Right cardiac atrium (tissue), 5 donors: ENCODE measurements at regions of chr14 and their contacts with region 1.

Region 1: GRCh38 chr14:23478111-23478759 is 8.7 kb downstream of the NGDN start:
- DNase-seq: peak; percentile 38 to 74 (median 62)
- ATAC-seq: peak; percentile 30 to 50
- H3K4me3 ChIP-seq: no peak overlapping the region
- H3K27ac ChIP-seq: no peak overlapping the region
- H3K4me1 ChIP-seq: no peaks in the 10 kb centered on the region
- H3K27me3 ChIP-seq: no peaks in the 10 kb centered on the region

Region 2: GRCh38 chr14:23555882-23556699 is 77.9 kb after region 1 on chr14 and contains the start of gene THTPA:
- intact Hi-C with region 1: loop called in 1 of 4 experiments (anchors 5 kb)
- DNase-seq: peak; percentile 96 to 98 (median 96)
- ATAC-seq: peak; percentile 94
- H3K4me3 ChIP-seq: peak within 1 kb of the TSS; percentile 74
- H3K27ac ChIP-seq: peak within 1 kb of the TSS; percentile 99
- H3K4me1 ChIP-seq: peaks cover 7% of the 10 kb centered on the region
- H3K27me3 ChIP-seq: no peaks in the 10 kb centered on the region
- total RNA-seq, gene THTPA: 18.8 to 21.5 (median 20.9) TPM

Region 3: GRCh38 chr14:23567192-23568020 is 89.2 kb after region 1 on chr14 and contains the start of gene AP1G2:
- intact Hi-C with region 1: loop called in 3 of 4 experiments (anchors 2 kb)
- DNase-seq: peak; percentile 86 to 95 (median 95)
- ATAC-seq: peak; percentile 83 to 84
- H3K4me3 ChIP-seq: peak within 1 kb of the TSS; percentile 70
- H3K27ac ChIP-seq: peak within 1 kb of the TSS; percentile 32
- H3K4me1 ChIP-seq: no peaks in the 10 kb centered on the region
- H3K27me3 ChIP-seq: no peaks in the 10 kb centered on the region
- total RNA-seq, gene AP1G2: 13.8 to 17.9 (median 15.4) TPM